Cardiac septum (tissue), 1 donor: ENCODE measurements at regions of chr1 and their contacts with region 1.

Region 1: GRCh38 chr1:236868625-236869467 is 73.8 kb downstream of the MTR start:
- DNase-seq: no peak

Region 2: DNA sequence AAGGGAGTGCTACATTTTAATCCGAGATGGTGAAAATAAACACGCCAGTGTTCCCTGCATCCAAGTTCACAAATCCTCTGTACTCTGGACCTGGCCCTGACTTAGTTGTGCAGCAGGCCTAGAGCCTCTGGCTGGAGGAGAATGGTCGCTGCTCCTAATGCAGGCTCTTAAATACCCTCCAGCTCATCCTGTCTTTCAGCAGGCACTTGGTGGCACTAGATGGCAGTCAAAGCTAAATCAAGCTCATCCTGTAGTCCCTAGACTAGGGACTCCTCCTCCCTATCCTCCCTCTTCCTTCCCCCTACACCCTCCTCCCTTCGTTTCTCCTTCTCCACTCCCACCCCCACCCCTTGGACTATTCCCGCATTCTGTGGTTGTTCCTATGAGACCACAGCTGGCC is 115.3 kb before region 1 on chr1:
- intact Hi-C with region 1: loop called (anchors 5 kb)
- DNase-seq: no peak

Region 3: GRCh38 chr1:236810018-236810417 is 58.8 kb before region 1 on chr1:
- intact Hi-C with region 1: loop called (anchors 10 kb)
- DNase-seq: no peak

Region 4: DNA sequence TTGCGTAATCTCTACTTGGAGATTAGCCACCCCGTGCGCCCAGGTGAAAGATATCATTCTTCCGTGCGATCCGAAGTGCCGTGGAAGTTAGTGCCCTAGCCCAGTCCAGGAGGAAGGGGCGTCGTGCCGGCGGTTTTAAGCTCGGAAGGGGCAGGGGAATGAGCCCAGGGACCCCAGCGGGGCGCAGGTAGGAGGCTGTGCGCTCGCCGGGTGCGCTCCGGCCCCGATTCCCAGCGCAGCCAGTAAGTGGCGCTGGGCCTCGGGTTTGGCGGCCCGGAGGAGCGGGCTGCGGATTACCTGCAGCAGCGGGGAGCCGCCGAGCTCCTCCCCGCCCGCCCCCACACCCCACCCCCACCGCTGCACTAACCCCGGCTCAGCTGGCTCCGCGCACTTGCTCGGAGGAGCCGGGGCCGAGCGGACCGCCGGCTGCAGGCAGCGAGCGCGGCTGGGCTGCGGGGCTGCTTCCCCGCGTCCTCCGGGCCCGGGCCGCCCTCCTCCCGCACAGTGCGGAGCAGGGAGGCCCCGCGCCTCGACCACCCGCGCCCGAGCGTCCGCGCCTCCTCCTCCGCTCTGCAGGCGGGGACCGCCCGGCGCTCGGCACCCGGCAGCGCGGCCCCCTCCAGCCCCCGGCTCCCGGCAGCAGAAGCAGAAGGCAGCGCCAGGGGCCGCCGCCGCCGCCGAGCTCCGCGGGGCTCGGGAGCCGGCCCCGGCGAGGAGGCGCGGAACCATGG is 173.1 kb after region 1 on chr1 and contains the start of gene RYR2:
- intact Hi-C with region 1: no loop called
- DNase-seq: no peak
- total RNA-seq, gene RYR2: 572 TPM